ENCODE measurements at regions of chr7 and their contacts with region 1.

Region 1: GRCh38 chr7:36389371-36390198 is at the start of gene ANLN:
- DNase-seq: peak; percentile 83
- H3K4me3 Mint-ChIP-seq: peak within 1 kb of the TSS; percentile 89
- H3K27ac Mint-ChIP-seq: peak within 1 kb of the TSS; percentile 79
- H3K4me1 Mint-ChIP-seq: peaks cover 33% of the 10 kb centered on the region
- H3K27me3 Mint-ChIP-seq: peaks cover 7% of the 10 kb centered on the region
- total RNA-seq, gene ANLN: 38.0 and 38.7 TPM in 2 replicates

Region 2: DNA sequence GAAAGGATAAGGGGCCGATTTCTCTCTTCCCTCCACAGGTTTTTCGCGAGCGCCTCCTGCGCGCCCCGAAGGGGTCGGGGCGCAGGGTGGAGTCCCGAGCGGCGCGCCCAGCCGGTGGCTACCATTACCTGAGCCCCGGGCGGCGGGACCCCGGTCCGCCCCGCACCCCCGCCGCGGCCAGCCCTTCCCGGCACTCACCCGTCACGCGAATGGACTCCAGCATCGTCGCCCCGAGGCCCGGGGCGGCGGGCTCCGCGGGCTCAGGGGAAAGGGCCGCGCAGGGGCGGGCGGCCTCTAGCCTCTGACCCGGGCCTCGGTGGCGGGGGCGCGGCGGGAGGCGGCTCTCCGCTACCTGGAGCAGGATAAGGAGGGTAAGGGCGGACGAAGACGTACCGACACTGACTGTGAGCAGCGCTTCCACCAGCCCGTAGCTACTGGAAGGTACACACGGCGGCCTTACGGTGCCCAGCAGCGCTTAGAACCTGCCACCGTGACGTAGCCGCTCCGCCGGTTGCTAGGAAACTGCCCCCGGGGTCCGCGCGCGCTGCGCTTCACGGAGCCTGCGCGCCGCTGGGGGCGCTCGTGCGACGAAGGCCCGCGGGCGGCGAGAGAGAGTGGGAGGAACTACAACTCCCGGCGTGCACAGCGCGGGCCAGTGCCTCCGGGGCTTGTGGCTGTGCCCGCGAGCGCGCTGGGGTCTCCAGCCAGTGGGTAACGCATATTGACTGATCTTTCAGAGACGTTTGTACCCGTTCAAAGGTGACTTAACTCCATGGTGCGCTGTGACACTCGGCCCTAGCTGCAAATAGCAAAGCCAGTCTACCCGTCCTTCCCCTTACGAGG is 22.6 kb before region 1 on chr7:
- intact Hi-C with region 1: loop called (anchors 1 kb)
- DNase-seq: peak; percentile 87
- H3K4me3 Mint-ChIP-seq: peak overlapping the region; percentile 84
- H3K27ac Mint-ChIP-seq: no peak overlapping the region
- H3K4me1 Mint-ChIP-seq: peaks cover 11% of the 10 kb centered on the region
- H3K27me3 Mint-ChIP-seq: peaks cover 39% of the 10 kb centered on the region

Region 3: GRCh38 chr7:36440880-36441279 is 51.3 kb after region 1 on chr7:
- intact Hi-C with region 1: no loop called
- DNase-seq: no peak
- H3K4me3 Mint-ChIP-seq: no peak overlapping the region
- H3K27ac Mint-ChIP-seq: no peak overlapping the region
- H3K4me1 Mint-ChIP-seq: peaks cover 4% of the 10 kb centered on the region
- H3K27me3 Mint-ChIP-seq: no peaks in the 10 kb centered on the region

Region 4: DNA sequence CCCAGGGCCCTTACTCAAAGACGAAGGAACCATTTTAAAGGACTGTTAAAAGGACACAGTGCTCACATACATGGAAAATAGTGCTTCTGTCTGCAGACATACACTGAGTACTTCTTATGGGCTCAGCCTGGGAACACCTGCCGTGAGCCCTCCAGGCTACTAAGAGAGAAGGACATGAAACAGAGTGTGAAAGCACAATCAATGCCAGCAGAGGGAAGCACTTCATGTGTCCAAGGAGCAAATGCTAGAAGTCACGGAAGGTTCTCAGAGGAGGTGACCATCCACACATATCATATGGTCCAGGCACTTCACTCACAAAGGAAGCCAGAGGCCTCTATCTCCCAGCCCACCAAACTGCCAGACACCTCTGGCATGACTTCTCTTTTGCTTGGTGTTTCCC is 1043.6 kb after region 1 on chr7:
- intact Hi-C with region 1: loop called (anchors 10 kb)
- DNase-seq: no peak
- H3K4me3 Mint-ChIP-seq: no peak overlapping the region
- H3K27ac Mint-ChIP-seq: no peak overlapping the region
- H3K4me1 Mint-ChIP-seq: peaks cover 25% of the 10 kb centered on the region
- H3K27me3 Mint-ChIP-seq: peaks cover 5% of the 10 kb centered on the region

Region 5: GRCh38 chr7:38169847-38170246 is 1780.3 kb after region 1 on chr7:
- intact Hi-C with region 1: no loop called
- DNase-seq: no peak
- H3K4me3 Mint-ChIP-seq: no peak overlapping the region
- H3K27ac Mint-ChIP-seq: no peak overlapping the region
- H3K4me1 Mint-ChIP-seq: peaks cover 32% of the 10 kb centered on the region
- H3K27me3 Mint-ChIP-seq: peaks cover 26% of the 10 kb centered on the region